Panc1 (cell line): ENCODE measurements at regions of chr10 and their contacts with region 1.

Region 1: GRCh38 chr10:95031656-95032055 is 37.6 kb downstream of the CYP2C8 start:
- DNase-seq: no peak
- ATAC-seq: no peak
- H3K4me3 ChIP-seq: no peak overlapping the region
- H3K27ac ChIP-seq: no peak overlapping the region
- H3K4me1 ChIP-seq: no peaks in the 10 kb centered on the region
- H3K27me3 ChIP-seq: no peaks in the 10 kb centered on the region; the same call in 1 of the 2 replicates
- CTCF ChIP-seq: no peak

Region 2: GRCh38 chr10:95478935-95479334 is 447.3 kb after region 1 on chr10:
- CTCF ChIA-PET with region 1: interaction called, 11 read pairs
- POLR2A ChIA-PET with region 1: no interaction called
- in situ Hi-C with region 1: no loop called
- intact Hi-C with region 1: no loop called
- DNase-seq: no peak
- ATAC-seq: no peak
- H3K4me3 ChIP-seq: no peak overlapping the region
- H3K27ac ChIP-seq: 0 out of 2 replicates have a peak overlapping the region, but pooled peaks have one; percentile 2
- H3K4me1 ChIP-seq: peaks cover 28% of the 10 kb centered on the region
- H3K27me3 ChIP-seq: no peaks in the 10 kb centered on the region
- CTCF ChIP-seq: no peak